ENCODE measurements at regions of chr1 and their contacts with region 1.

Region 1: DNA sequence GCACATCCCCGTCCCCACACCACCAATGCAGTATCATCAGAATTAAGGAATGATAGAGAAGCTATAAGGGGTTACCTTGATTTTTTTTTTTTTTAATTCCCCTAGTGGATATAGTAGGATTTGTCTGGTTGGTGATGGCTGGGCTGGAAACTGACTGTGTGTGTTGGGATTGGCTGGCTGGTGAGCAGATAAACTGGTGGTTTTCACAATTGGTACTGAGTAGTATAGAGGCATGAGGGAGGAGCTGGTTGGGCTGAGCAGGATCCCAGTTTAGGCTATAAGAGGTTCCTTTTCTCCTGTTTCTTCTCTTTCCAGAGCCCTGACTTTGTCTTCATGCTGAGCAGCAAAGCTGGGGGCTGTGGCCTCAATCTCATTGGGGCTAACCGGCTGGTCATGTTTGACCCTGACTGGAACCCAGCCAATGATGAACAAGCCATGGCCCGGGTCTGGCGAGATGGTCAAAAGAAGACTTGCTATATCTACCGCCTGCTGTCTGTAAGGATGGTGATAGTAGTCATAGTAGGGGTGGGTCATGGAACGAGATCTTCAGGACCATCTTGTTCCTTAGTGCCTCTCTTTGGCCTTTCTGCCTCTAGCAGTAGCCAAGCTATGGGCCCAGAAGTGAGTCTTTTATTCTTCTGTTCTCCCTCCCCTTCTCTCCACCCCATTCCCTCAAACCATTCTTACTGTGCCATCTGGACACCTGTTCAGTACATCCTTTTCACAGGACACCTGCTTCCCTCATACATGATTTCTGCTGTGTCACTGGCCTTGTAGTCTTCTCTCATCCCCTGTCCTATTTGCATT is 26.9 kb downstream of the RAD54L start:
- DNase-seq: no peak
- CTCF ChIP-seq: no peak

Region 2: GRCh38 chr1:46262508-46262907 is 11.9 kb before region 1 on chr1:
- CTCF ChIA-PET with region 1: interaction called, 24 read pairs
- POLR2A ChIA-PET with region 1: interaction called, 4 read pairs
- DNase-seq: no peak
- CTCF ChIP-seq: no peak